Transverse colon (tissue), 4 donors: ENCODE measurements at regions of chr2 and their contacts with region 1.

Region 1: GRCh38 chr2:164717000-164717803 is 95.9 kb upstream of the GRB14 start:
- DNase-seq: no peak
- H3K4me3 ChIP-seq: no peak overlapping the region
- H3K27ac ChIP-seq: no peak overlapping the region
- H3K4me1 ChIP-seq: no peaks in the 10 kb centered on the region
- H3K27me3 ChIP-seq: no peaks in the 10 kb centered on the region
- CTCF ChIP-seq: peak; percentile 58 to 67 (median 63)
- EP300 ChIP-seq: no peak
- POLR2A ChIP-seq: no peak

Region 2: DNA sequence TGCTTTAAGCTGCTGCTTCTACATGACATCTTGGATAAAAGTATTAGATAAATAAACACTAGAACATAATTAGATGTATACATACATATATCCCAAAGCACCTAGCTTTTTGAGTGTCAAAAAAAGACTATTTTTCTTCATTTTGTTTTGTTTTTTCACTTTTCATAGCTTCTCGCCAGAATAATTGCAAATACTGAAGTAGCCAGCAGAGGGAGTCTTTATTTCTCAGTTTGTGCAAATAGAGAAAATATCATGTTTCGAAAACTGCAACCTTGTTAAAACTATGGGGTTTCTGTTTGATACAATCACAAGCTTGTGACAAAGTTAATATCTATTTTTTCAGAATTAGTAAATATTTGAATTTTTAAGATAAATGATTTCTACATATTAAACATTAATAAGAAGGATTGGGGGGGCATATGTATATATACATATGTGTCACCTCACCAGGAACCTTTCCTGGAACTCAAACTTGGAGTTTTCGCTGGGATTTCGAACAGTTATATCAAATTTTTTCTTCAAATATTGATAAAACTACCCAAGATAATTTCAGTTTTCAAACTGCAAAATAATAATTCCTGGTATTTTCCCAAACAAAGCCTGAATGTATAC is 156.9 kb before region 1 on chr2:
- in situ Hi-C with region 1: loop called in 1 of 4 experiments (anchors 25 kb)
- intact Hi-C with region 1: no loop called
- DNase-seq: no peak
- H3K4me3 ChIP-seq: no peak overlapping the region
- H3K27ac ChIP-seq: no peak overlapping the region
- H3K4me1 ChIP-seq: peaks cover 0 to 7% (median 0%) of the 10 kb centered on the region in 4 donors
- H3K27me3 ChIP-seq: no peaks in the 10 kb centered on the region
- CTCF ChIP-seq: peak; percentile 55 to 66 (median 60)
- EP300 ChIP-seq: no peak
- POLR2A ChIP-seq: no peak